ENCODE measurements at regions of chr7 and their contacts with region 1.

Region 1: DNA sequence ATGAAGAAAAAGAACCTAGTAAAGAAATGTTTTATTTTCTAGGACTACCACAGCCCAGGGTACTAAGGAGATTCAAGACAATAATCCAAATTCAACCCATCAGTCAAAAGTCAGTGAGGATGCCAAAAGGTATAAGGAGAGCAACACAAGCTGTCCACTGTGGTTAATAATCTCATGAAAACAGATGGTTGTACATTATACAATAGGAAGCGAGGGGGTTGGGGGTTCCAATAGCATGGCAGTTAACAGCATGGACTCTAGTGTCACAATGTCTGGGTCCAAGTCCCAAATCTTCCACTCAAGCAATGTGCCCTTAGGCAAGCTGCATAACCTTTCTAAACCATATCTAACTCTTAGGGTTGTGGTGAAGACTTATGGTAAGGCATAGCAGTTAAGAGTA is 35.1 kb downstream of the BRAF start:
- DNase-seq: no peak
- ATAC-seq: no peak
- H3K4me3 ChIP-seq: no peak overlapping the region
- H3K4me3 Mint-ChIP-seq: no peak overlapping the region
- H3K27ac ChIP-seq: no peak overlapping the region
- H3K27ac Mint-ChIP-seq: peak overlapping the region in 1 of 9 donors; percentile 33
- H3K4me1 ChIP-seq: peaks cover 4 to 13% of the 10 kb centered on the region in 2 donors
- H3K4me1 Mint-ChIP-seq: peaks cover 5 to 95% (median 79%) of the 10 kb centered on the region in 7 donors
- H3K27me3 ChIP-seq: no peaks in the 10 kb centered on the region
- H3K27me3 Mint-ChIP-seq: no peaks in the 10 kb centered on the region

Region 2: GRCh38 chr7:140857048-140857447 is 32.6 kb before region 1 on chr7:
- CTCF ChIA-PET with region 1: no interaction called
- POLR2A ChIA-PET with region 1: no interaction called
- intact Hi-C with region 1: loop called in 1 of 2 experiments (anchors 5 kb)
- DNase-seq: no peak
- ATAC-seq: no peak
- H3K4me3 ChIP-seq: no peak overlapping the region
- H3K4me3 Mint-ChIP-seq: no peak overlapping the region
- H3K27ac ChIP-seq: no peak overlapping the region
- H3K27ac Mint-ChIP-seq: peak overlapping the region in 1 of 9 donors; percentile 13
- H3K4me1 ChIP-seq: no peaks in the 10 kb centered on the region
- H3K4me1 Mint-ChIP-seq: peaks cover 0 to 73% (median 54%) of the 10 kb centered on the region in 7 donors
- H3K27me3 ChIP-seq: no peaks in the 10 kb centered on the region
- H3K27me3 Mint-ChIP-seq: no peaks in the 10 kb centered on the region

Region 3: DNA sequence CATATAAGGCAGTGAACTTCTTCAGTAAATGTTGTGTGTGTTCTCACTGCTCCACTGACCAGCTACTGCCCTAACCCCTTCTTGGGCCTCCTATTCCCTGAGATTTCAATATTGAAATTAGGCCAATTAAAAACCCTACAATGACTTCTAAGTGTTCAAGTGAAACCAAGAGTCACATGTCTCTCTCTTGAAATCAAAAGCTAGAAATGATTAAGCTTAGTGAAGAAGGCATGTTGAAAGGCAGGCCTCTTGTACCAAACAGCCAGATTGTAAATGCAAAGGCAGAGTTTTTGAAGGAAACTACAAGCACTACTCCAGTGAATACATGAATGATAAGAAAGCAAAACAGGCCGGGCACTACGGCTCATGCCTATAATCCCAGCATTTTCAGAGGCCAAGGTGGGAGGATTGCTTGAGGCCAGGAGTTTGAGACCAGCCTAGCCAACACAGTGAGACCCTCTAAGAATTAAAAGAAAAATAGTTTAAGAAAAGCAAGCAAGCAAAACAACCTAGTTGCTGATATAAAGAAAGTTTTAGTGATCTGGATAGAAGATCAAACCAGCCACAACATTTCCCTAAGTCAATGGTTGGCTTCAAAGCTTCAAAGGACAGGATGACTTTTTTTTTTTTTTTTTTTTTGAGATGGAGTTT is 12.8 kb after region 1 on chr7:
- CTCF ChIA-PET with region 1: no interaction called
- POLR2A ChIA-PET with region 1: interaction called, 3 read pairs
- intact Hi-C with region 1: loop called in 1 of 2 experiments (anchors 2 kb)
- DNase-seq: peak in 7 of 9 donors; percentile 36 to 71 (median 60)
- ATAC-seq: peak; percentile 65
- H3K4me3 ChIP-seq: peak overlapping the region; percentile 28
- H3K4me3 Mint-ChIP-seq: peak overlapping the region; percentile 58 to 83 (median 72)
- H3K27ac ChIP-seq: peak overlapping the region; percentile 58
- H3K27ac Mint-ChIP-seq: peak overlapping the region; percentile 73 to 94 (median 87)
- H3K4me1 ChIP-seq: peaks cover 0 to 11% of the 10 kb centered on the region in 2 donors
- H3K4me1 Mint-ChIP-seq: peaks cover 31 to 84% (median 75%) of the 10 kb centered on the region in 7 donors
- H3K27me3 ChIP-seq: no peaks in the 10 kb centered on the region
- H3K27me3 Mint-ChIP-seq: no peaks in the 10 kb centered on the region

Region 4: DNA sequence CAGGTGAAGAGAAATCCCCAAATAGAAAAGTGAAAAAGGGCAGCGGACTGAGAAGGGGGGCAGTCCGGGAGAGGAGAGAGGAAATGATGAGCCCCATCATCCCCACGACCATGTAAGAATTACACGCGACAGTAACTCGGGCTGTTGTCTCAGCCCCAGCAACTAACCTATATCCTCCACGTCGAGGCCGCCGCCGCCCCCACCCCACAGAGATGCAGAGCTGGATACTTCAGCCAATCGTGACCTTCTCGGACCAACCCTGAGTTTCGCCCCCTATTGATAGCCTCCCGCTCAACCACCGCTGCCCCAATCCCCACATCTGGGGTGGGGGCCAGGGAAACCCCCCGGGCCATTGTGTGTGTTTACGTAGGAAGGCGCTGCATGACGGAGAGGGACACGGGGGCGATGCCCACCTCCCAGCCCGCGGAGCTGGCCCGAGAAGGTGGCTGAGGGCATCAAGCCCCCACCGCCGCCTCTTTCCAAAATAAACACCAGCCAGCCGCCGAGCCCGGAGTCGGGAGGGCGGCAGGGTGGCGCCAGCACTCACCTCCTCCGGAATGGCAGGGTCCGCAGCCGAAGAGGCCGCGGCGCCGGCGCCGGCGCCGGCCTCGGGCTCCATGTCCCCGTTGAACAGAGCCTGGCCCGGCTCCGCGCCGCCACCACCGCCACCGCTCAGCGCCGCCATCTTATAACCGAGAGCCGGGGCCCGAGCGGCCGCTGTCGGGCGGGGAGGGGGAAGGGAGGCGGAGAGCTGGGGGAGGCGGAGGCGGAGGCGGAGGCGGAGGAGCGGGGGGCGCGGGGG is 34.6 kb after region 1 on chr7:
- CTCF ChIA-PET with region 1: no interaction called
- POLR2A ChIA-PET with region 1: no interaction called
- intact Hi-C with region 1: no loop called
- DNase-seq: peak; percentile 61 to 89 (median 70)
- ATAC-seq: peak; percentile 84
- H3K4me3 ChIP-seq: peak overlapping the region; percentile 85
- H3K4me3 Mint-ChIP-seq: peak overlapping the region in 1 of 10 donors; percentile 89
- H3K27ac ChIP-seq: peak overlapping the region; percentile 100
- H3K27ac Mint-ChIP-seq: peak overlapping the region in 3 of 9 donors; percentile 92 to 99 (median 94)
- H3K4me1 ChIP-seq: peaks cover 9 to 18% of the 10 kb centered on the region in 2 donors
- H3K4me1 Mint-ChIP-seq: peaks cover 10 to 44% (median 22%) of the 10 kb centered on the region in 7 donors
- H3K27me3 ChIP-seq: no peaks in the 10 kb centered on the region
- H3K27me3 Mint-ChIP-seq: peaks cover 0 to 5% (median 0%) of the 10 kb centered on the region in 5 donors

Measured in naive thymus-derived CD4-positive, alpha-beta T cell (primary cell).